ENCODE measurements at regions of chr9 and their contacts with region 1.

Region 1: GRCh38 chr9:22129633-22130032 is 120.5 kb upstream of the CDKN2B start:
- DNase-seq: no peak
- ATAC-seq: no peak

Region 2: DNA sequence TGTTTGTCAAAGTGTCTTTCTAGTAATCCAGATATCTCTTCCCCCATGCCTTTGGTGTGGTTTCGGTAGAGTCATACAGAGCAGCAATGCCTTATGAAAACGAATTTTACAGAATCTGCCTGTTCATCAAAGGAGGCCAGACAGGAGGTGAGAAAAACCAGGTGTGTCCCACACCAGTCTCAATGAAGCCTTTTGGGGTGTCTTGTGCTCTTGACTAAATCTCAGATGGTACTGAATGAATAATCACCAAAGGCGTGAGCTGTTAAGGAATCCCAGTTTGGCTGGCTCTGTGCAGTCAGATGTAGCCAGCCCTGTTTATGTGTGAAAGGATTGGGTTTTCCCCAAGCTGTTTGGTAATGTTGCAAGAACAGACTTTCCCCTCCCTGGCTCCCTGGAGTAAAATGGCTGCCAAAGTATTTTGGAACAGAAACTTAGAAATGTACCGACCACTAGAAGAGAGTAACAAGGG is 49.7 kb before region 1 on chr9:
- intact Hi-C with region 1: no loop called
- DNase-seq: no peak
- ATAC-seq: peak; percentile 98

Region 3: DNA sequence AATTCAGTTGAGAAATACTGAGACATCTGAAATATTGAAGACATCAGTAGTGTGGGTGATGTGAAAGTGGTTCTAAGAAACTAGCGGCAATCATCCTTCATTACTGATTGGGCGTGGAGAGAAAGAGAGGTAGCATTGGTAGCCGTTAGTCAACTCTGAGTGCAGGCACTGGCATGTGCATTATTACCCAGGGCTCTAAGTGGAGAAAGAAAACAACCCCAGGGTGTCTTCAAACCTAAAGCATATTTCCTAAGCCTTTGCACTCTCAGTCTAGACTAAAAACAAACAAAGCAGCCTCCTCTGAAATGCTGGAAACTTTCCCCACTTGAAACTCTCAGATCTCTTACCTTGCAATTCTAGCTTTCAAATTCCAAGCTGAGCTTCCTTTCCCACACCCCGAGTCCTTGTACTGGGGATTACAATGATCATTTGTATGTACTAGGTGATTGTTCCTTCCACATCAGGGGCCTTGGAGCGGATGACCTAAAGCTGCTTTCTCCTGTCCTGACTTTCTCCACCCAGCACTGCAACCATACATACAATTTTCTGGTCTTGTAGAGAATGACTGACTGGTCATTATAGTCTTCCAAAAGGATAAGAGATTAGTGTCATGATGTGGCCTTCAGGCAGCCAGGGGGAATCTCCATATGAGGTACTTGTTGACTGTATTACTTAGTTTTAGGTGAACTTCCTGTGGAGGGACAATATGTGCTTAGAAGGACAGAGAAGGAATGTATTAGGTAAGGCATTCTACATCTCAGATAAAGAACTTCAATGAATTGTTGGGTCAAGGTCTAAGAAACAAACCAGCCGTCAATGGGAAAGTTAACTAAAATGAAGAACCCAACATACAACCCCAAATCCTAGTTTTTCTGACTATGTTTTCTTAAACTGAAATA is 22.2 kb before region 1 on chr9:
- intact Hi-C with region 1: loop called (anchors 1 kb)
- DNase-seq: no peak
- ATAC-seq: no peak

Region 4: GRCh38 chr9:22158927-22159346 is 29.3 kb after region 1 on chr9:
- intact Hi-C with region 1: no loop called
- DNase-seq: no peak
- ATAC-seq: peak; percentile 93